Naive thymus-derived CD4-positive, alpha-beta T cell (primary cell): ENCODE measurements at regions of chr6 and their contacts with region 1.

Region 1: DNA sequence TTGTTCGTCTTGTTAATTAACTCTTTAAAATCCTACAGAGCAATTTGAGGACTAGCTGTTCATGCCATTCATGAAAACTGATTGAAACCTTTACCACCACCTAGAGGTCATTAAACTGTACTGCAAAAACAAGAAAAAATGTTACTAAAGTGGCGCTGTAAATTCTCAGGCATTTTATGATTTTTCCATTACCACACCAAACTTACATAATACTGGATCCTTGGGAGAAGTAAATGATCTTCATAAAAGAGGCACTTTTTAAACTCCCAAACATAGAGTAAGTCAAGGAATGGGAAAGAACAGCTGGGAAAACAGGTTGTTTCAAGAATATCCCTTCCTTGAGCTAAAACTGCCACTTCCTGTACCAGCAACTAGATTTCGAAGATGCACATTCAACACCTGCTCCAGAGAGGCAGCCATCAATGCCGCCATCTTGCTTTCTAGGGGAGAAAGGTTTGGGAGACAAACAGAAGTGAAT is 54.3 kb downstream of the MYLIP start:
- DNase-seq: peak in 6 of 9 donors; percentile 25 to 64 (median 58)
- ATAC-seq: peak; percentile 35
- H3K4me3 ChIP-seq: no peak overlapping the region
- H3K4me3 Mint-ChIP-seq: peak overlapping the region in 5 of 10 donors; percentile 1 to 62 (median 39)
- H3K27ac ChIP-seq: no peak overlapping the region
- H3K27ac Mint-ChIP-seq: peak overlapping the region in 8 of 9 donors; percentile 9 to 73 (median 64)
- H3K4me1 ChIP-seq: peaks cover 10 to 21% of the 10 kb centered on the region in 2 donors
- H3K4me1 Mint-ChIP-seq: peaks cover 5 to 50% (median 43%) of the 10 kb centered on the region in 7 donors
- H3K27me3 ChIP-seq: no peaks in the 10 kb centered on the region
- H3K27me3 Mint-ChIP-seq: peaks cover 0 to 19% (median 0%) of the 10 kb centered on the region in 5 donors

Region 2: GRCh38 chr6:14638906-14639761 is 1544.1 kb before region 1 on chr6:
- CTCF ChIA-PET with region 1: no interaction called
- POLR2A ChIA-PET with region 1: no interaction called
- intact Hi-C with region 1: loop called in 1 of 2 experiments (anchors 5 kb)
- DNase-seq: no peak
- ATAC-seq: peak; percentile 54
- H3K4me3 ChIP-seq: no peak overlapping the region
- H3K4me3 Mint-ChIP-seq: peak overlapping the region in 1 of 10 donors; percentile 14
- H3K27ac ChIP-seq: no peak overlapping the region
- H3K27ac Mint-ChIP-seq: peak overlapping the region in 2 of 9 donors; percentile 25 to 46
- H3K4me1 ChIP-seq: peaks cover 27 to 29% of the 10 kb centered on the region in 2 donors
- H3K4me1 Mint-ChIP-seq: peaks cover 41 to 63% (median 52%) of the 10 kb centered on the region in 7 donors
- H3K27me3 ChIP-seq: no peaks in the 10 kb centered on the region
- H3K27me3 Mint-ChIP-seq: peaks cover 0 to 25% (median 4%) of the 10 kb centered on the region in 5 donors

Region 3: DNA sequence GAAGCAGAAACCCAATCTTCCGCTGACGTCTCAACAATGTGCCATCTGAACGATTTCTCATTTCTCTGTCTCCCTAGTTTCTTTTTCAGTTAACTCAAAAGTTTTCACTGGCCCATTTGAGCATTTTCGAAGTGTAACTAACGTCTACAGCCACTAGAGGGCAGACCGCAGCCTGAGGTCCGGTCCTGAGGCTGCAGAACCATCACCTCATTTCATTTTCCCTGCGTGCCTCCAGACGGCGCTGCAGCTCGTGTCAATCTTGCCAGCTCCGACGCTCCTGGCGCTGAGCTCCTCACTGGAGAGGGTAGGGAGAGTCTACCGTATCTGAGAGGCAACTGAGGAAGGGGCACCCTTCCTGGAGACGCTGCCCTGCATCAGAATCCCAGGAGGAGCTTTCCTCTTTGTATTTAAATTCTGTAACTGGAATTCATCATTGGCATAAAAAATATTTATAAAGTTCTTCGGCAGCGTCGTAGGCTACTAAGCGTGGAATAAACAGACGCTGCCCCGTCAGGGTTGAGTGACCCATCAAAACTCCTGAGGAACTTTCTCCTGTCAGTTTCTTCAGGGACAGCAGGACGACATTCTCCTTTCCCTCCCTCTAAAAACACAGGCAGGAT is 491.9 kb before region 1 on chr6:
- CTCF ChIA-PET with region 1: interaction called, 77 read pairs
- POLR2A ChIA-PET with region 1: interaction called, 3 read pairs
- intact Hi-C with region 1: loop called (anchors 1 kb)
- DNase-seq: peak; percentile 56 to 84 (median 76)
- ATAC-seq: peak; percentile 100
- H3K4me3 ChIP-seq: no peak overlapping the region
- H3K4me3 Mint-ChIP-seq: peak overlapping the region in 2 of 10 donors; percentile 25 to 56
- H3K27ac ChIP-seq: no peak overlapping the region
- H3K27ac Mint-ChIP-seq: peak overlapping the region in 3 of 9 donors; percentile 1 to 23 (median 4)
- H3K4me1 ChIP-seq: no peaks in the 10 kb centered on the region
- H3K4me1 Mint-ChIP-seq: peaks cover 4 to 9% (median 7%) of the 10 kb centered on the region in 7 donors
- H3K27me3 ChIP-seq: no peaks in the 10 kb centered on the region
- H3K27me3 Mint-ChIP-seq: peaks cover 0 to 5% (median 0%) of the 10 kb centered on the region in 5 donors

Region 4: GRCh38 chr6:15962449-15962764 is 220.8 kb before region 1 on chr6:
- CTCF ChIA-PET with region 1: no interaction called
- POLR2A ChIA-PET with region 1: no interaction called
- intact Hi-C with region 1: no loop called
- DNase-seq: peak in 2 of 9 donors; percentile 6 to 8
- ATAC-seq: no peak
- H3K4me3 ChIP-seq: no peak overlapping the region
- H3K4me3 Mint-ChIP-seq: peak overlapping the region in 1 of 10 donors; percentile 38
- H3K27ac ChIP-seq: no peak overlapping the region
- H3K27ac Mint-ChIP-seq: peak overlapping the region in 3 of 9 donors; percentile 5 to 61 (median 6)
- H3K4me1 ChIP-seq: peaks cover 0 to 3% of the 10 kb centered on the region in 2 donors
- H3K4me1 Mint-ChIP-seq: peaks cover 8 to 30% (median 17%) of the 10 kb centered on the region in 7 donors
- H3K27me3 ChIP-seq: no peaks in the 10 kb centered on the region
- H3K27me3 Mint-ChIP-seq: peaks cover 0 to 4% (median 0%) of the 10 kb centered on the region in 5 donors

Region 5: DNA sequence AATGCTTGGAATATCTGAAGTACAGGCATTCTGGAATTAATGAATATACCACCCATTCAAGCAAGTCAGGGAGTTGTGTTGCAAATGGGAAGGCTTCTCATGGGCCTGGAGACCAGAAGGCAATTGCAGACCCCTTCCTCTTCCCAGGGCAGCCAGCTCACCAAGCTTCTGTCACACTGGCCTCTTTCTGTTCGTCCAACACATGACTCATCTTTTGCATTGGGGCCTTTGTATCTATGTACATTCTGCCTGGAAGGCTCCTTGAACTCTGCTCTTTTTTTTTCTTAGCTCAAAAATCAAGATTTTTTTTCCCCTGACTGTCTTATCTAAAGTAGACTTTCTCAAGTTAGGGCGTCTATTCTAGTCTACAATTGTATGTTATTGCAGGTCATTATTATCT is 187.2 kb before region 1 on chr6:
- CTCF ChIA-PET with region 1: no interaction called
- POLR2A ChIA-PET with region 1: no interaction called
- intact Hi-C with region 1: loop called in 1 of 2 experiments (anchors 10 kb)
- DNase-seq: no peak
- ATAC-seq: no peak
- H3K4me3 ChIP-seq: no peak overlapping the region
- H3K4me3 Mint-ChIP-seq: no peak overlapping the region
- H3K27ac ChIP-seq: no peak overlapping the region
- H3K27ac Mint-ChIP-seq: no peak overlapping the region
- H3K4me1 ChIP-seq: no peaks in the 10 kb centered on the region
- H3K4me1 Mint-ChIP-seq: peaks cover 0 to 8% (median 0%) of the 10 kb centered on the region in 7 donors
- H3K27me3 ChIP-seq: no peaks in the 10 kb centered on the region
- H3K27me3 Mint-ChIP-seq: peaks cover 0 to 14% (median 10%) of the 10 kb centered on the region in 5 donors

Region 6: GRCh38 chr6:16206595-16207037 is 23.4 kb after region 1 on chr6:
- CTCF ChIA-PET with region 1: interaction called, 11 read pairs
- POLR2A ChIA-PET with region 1: no interaction called
- intact Hi-C with region 1: loop called (anchors 1 kb)
- DNase-seq: peak in 7 of 9 donors; percentile 19 to 63 (median 54)
- ATAC-seq: peak; percentile 86
- H3K4me3 ChIP-seq: no peak overlapping the region
- H3K4me3 Mint-ChIP-seq: no peak overlapping the region
- H3K27ac ChIP-seq: no peak overlapping the region
- H3K27ac Mint-ChIP-seq: peak overlapping the region in 1 of 9 donors; percentile 48
- H3K4me1 ChIP-seq: no peaks in the 10 kb centered on the region
- H3K4me1 Mint-ChIP-seq: peaks cover 0 to 6% (median 0%) of the 10 kb centered on the region in 7 donors
- H3K27me3 ChIP-seq: no peaks in the 10 kb centered on the region
- H3K27me3 Mint-ChIP-seq: peaks cover 5 to 25% (median 19%) of the 10 kb centered on the region in 5 donors

Region 7: DNA sequence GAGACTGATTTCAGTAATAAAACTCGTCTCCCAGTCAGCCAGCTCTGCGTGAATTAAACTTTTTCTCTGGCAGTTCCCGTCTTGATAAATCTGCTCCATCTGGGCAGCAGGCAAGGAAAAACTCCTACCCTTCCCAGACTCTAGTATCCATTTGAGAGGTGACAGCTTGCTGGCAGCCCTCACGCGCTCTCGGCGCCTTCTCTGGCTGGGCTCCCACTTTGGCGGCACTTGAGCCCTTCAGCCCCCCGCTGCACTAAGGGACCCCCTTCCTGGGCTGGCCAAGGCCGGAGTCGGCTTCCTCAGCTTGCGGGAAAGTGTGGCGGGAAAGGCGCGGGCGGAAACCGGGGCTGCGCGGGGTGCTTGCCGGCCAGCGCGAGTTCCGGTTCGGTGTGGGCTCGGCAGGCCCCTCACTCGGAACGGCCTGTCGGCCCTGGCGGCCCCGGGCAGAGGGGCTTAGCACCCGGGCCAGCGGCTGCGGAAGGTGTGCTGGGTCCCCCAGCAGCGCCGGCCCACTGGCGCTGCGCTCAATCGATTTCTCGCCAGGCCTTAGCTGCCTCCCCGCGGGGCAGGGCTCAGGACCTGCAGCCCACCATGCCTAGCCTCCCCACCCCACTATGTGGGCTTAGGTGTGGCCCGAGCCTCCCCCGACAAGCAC is 33.4 kb after region 1 on chr6:
- CTCF ChIA-PET with region 1: no interaction called
- POLR2A ChIA-PET with region 1: no interaction called
- intact Hi-C with region 1: no loop called
- DNase-seq: no peak
- ATAC-seq: no peak
- H3K4me3 ChIP-seq: no peak overlapping the region
- H3K4me3 Mint-ChIP-seq: no peak overlapping the region
- H3K27ac ChIP-seq: no peak overlapping the region
- H3K27ac Mint-ChIP-seq: no peak overlapping the region
- H3K4me1 ChIP-seq: no peaks in the 10 kb centered on the region
- H3K4me1 Mint-ChIP-seq: peaks cover 0 to 5% (median 0%) of the 10 kb centered on the region in 7 donors
- H3K27me3 ChIP-seq: no peaks in the 10 kb centered on the region
- H3K27me3 Mint-ChIP-seq: peaks cover 24 to 48% (median 37%) of the 10 kb centered on the region in 5 donors

Region 8: GRCh38 chr6:16339263-16339587 is 156.0 kb after region 1 on chr6:
- CTCF ChIA-PET with region 1: no interaction called
- POLR2A ChIA-PET with region 1: no interaction called
- intact Hi-C with region 1: no loop called
- DNase-seq: no peak
- ATAC-seq: no peak
- H3K4me3 ChIP-seq: no peak overlapping the region
- H3K4me3 Mint-ChIP-seq: no peak overlapping the region
- H3K27ac ChIP-seq: no peak overlapping the region
- H3K27ac Mint-ChIP-seq: peak overlapping the region in 2 of 9 donors; percentile 19 to 21
- H3K4me1 ChIP-seq: no peaks in the 10 kb centered on the region
- H3K4me1 Mint-ChIP-seq: peaks cover 0 to 12% (median 0%) of the 10 kb centered on the region in 7 donors
- H3K27me3 ChIP-seq: no peaks in the 10 kb centered on the region
- H3K27me3 Mint-ChIP-seq: no peaks in the 10 kb centered on the region